PC-3 (cell line): ENCODE measurements at regions of chr7 and their contacts with region 1.

Region 1: GRCh38 chr7:150378853-150379440 is at the start of gene ZNF775:
- DNase-seq: peak; percentile 94
- ATAC-seq: peak; percentile 94
- H3K4me3 ChIP-seq: peak within 1 kb of the TSS; percentile 89
- H3K27ac ChIP-seq: peak within 1 kb of the TSS; percentile 49
- H3K4me1 ChIP-seq: peaks cover 18% of the 10 kb centered on the region
- H3K27me3 ChIP-seq: no peaks in the 10 kb centered on the region
- CTCF ChIP-seq: no peak
- total RNA-seq, gene ZNF775: 3.7 and 4.7 TPM in 2 replicates

Region 2: DNA sequence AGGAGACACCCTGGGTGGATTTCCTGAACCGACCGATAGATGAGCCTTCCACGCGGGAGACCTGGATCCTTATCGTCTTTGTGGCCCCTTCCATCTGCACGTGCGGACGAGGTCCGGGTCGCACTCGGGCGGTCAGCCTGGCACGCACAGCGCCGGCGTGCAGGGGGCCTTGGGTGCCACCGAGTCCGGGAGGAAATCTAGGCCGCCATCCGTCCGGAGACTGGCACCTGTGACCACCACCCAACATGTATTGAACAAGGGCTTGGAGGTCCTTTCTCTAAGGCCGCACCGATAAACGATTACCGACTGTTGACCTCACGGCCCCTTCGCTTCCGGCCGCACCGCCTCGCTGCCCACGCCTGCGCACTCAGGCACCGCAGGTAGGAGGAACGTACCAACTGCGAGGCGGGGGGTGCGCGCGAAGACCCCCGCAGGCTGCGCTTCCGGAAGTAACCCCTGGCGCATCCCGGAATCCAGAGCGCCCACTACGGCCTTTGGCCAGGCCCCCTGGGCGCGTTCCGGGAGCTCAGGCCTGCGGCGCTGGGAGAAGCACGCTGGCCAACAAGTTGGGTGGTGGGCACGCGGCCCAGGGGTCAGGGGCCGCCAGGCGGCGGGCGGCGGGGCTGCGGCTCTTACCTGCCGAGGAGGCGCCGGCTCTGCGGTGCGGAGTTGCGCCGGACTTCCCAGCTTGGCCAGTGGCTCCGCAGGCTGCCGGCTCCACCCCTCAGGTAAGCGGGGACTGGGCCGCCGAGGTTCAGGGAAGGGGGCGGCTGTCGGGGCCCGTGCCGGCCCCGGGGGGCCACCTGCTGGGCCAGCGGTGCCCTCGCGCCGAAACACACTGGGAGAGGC is 55.9 kb before region 1 on chr7 and contains the starts of genes ACTR3C and LRRC61:
- CTCF ChIA-PET with region 1: no interaction called
- POLR2A ChIA-PET with region 1: no interaction called
- intact Hi-C with region 1: loop called (anchors 5 kb)
- DNase-seq: peak; percentile 39
- ATAC-seq: peak; percentile 83
- H3K4me3 ChIP-seq: peak within 1 kb of the TSS; percentile 81
- H3K27ac ChIP-seq: peak within 1 kb of the TSS; percentile 37; the same call in 1 of the 2 replicates
- H3K4me1 ChIP-seq: peaks cover 17% of the 10 kb centered on the region
- H3K27me3 ChIP-seq: no peaks in the 10 kb centered on the region
- CTCF ChIP-seq: 0 out of 2 replicates have a peak, but pooled peaks have one; percentile 23
- total RNA-seq, gene ACTR3C: 7.8 and 10.8 TPM in 2 replicates
- total RNA-seq, gene LRRC61: 15.1 and 16.4 TPM in 2 replicates

Region 3: GRCh38 chr7:150356265-150356897 is 22.6 kb before region 1 on chr7:
- CTCF ChIA-PET with region 1: interaction called, 3 read pairs
- POLR2A ChIA-PET with region 1: no interaction called
- intact Hi-C with region 1: loop called (anchors 1 kb)
- DNase-seq: peak; percentile 47
- ATAC-seq: no peak
- H3K4me3 ChIP-seq: no peak overlapping the region
- H3K27ac ChIP-seq: no peak overlapping the region
- H3K4me1 ChIP-seq: 0 out of 2 replicates have a peak, but pooled peaks cover 10% of the 10 kb centered on the region
- H3K27me3 ChIP-seq: no peaks in the 10 kb centered on the region
- CTCF ChIP-seq: peak; percentile 71

Region 4: GRCh38 chr7:150390205-150390604 is 11.3 kb after region 1 on chr7:
- CTCF ChIA-PET with region 1: no interaction called
- POLR2A ChIA-PET with region 1: no interaction called
- intact Hi-C with region 1: loop called (anchors 1 kb)
- DNase-seq: peak; percentile 71
- ATAC-seq: peak; percentile 99
- H3K4me3 ChIP-seq: no peak overlapping the region
- H3K27ac ChIP-seq: no peak overlapping the region
- H3K4me1 ChIP-seq: peaks cover 9% of the 10 kb centered on the region
- H3K27me3 ChIP-seq: no peaks in the 10 kb centered on the region
- CTCF ChIP-seq: no peak

Region 5: GRCh38 chr7:150404805-150405583 is 26.0 kb after region 1 on chr7:
- CTCF ChIA-PET with region 1: no interaction called
- POLR2A ChIA-PET with region 1: no interaction called
- intact Hi-C with region 1: loop called (anchors 1 kb)
- DNase-seq: peak; percentile 73
- ATAC-seq: peak; percentile 85
- H3K4me3 ChIP-seq: peak overlapping the region; percentile 78
- H3K27ac ChIP-seq: no peak overlapping the region
- H3K4me1 ChIP-seq: peaks cover 18% of the 10 kb centered on the region
- H3K27me3 ChIP-seq: no peaks in the 10 kb centered on the region
- CTCF ChIP-seq: peak; percentile 42

Region 6: DNA sequence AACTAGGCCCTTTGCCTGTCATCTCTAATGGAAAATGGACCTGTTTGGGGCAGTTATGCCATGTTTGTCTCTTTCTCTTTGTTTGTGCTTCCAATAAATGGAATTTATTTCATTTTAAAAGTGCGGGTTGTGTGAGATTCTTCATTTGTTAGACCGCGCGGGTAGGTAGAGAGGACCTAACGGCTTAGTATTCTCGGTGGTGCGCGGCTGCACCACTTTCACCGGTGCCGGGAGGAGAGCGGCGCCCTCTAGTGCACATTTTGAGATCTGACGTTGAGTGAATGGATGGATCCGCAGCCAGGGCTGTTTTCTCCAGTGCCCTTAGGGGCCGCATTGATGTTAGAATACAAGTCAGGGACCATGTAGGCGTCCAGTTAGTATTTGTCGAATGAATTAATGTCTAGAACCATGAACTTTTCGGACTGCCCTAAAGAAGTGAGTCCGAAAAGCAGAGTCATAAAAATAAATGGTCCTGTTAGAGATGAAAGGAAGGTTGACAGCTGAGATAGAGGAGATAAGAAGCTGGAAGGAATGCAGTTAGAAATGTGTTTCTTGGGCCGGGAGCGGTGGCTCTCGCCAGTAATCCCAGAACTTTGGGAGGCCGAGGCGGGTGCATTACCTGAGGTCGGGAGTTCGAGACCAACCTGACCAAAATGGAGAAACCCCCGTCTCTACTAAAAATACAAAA is 42.2 kb after region 1 on chr7:
- CTCF ChIA-PET with region 1: no interaction called
- POLR2A ChIA-PET with region 1: no interaction called
- intact Hi-C with region 1: loop called (anchors 1 kb)
- DNase-seq: peak; percentile 84
- ATAC-seq: peak; percentile 100
- H3K4me3 ChIP-seq: peak overlapping the region; percentile 29; the same call in 1 of the 2 replicates
- H3K27ac ChIP-seq: no peak overlapping the region
- H3K4me1 ChIP-seq: no peaks in the 10 kb centered on the region
- H3K27me3 ChIP-seq: no peaks in the 10 kb centered on the region
- CTCF ChIP-seq: peak; percentile 87